Activated T-helper 2 cell treated with anti-CD3 and anti-CD28 coated beads, Interferon-gamma antibody, Interleukin-2, Interleukin-4, amounts not matched to agents 10 μg/mL and 5 μg/mL and 100 μg/mL, durations not matched to agents 14 hours and 24 hours and 36 hours (primary cell): ENCODE measurements at regions of chr10 and their contacts with region 1.

Region 1: GRCh38 chr10:110610308-110610774 is 33.8 kb upstream of the RBM20 start:
- DNase-seq: peak; percentile 28
- H3K4me3 Mint-ChIP-seq: no peak overlapping the region
- H3K27ac Mint-ChIP-seq: no peak overlapping the region
- H3K4me1 Mint-ChIP-seq: peaks cover 26% of the 10 kb centered on the region
- H3K27me3 Mint-ChIP-seq: no peaks in the 10 kb centered on the region

Region 2: DNA sequence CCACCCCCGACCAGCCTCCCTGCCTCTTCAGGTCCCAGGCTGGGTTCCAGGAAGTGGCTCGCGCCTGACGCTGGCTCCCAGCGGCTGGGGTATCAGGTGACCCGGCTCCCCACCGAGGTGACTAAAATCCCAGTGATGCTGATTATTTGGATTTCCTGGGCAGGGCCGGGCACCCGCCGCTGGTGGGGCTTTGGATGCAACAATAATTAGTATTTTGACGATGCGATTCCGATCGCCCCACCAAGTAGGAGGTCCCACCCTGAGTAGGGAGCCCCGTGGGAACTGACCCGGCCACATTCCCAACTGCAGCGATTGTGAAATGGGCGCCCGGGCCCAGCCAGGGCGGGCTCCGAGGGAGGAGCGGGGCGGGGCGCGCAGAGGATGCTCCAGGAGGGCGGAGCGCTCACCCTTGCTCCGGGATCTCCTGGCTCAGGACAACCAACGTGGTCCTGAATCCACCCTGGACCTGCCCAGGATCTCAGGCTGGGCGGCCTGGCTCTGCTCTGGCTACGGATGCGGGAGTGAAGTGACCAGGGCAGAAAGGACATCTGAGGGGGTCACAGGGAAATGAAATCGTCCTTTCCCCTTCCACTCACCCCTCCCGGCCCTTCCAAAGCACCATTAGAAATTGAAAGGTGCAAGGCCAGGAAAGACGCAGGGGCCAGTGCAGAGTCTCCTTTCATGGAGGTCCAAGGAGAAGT is 80.1 kb before region 1 on chr10:
- intact Hi-C with region 1: no loop called
- DNase-seq: no peak
- H3K4me3 Mint-ChIP-seq: no peak overlapping the region
- H3K27ac Mint-ChIP-seq: no peak overlapping the region
- H3K4me1 Mint-ChIP-seq: peaks cover 61% of the 10 kb centered on the region
- H3K27me3 Mint-ChIP-seq: no peaks in the 10 kb centered on the region

Region 3: DNA sequence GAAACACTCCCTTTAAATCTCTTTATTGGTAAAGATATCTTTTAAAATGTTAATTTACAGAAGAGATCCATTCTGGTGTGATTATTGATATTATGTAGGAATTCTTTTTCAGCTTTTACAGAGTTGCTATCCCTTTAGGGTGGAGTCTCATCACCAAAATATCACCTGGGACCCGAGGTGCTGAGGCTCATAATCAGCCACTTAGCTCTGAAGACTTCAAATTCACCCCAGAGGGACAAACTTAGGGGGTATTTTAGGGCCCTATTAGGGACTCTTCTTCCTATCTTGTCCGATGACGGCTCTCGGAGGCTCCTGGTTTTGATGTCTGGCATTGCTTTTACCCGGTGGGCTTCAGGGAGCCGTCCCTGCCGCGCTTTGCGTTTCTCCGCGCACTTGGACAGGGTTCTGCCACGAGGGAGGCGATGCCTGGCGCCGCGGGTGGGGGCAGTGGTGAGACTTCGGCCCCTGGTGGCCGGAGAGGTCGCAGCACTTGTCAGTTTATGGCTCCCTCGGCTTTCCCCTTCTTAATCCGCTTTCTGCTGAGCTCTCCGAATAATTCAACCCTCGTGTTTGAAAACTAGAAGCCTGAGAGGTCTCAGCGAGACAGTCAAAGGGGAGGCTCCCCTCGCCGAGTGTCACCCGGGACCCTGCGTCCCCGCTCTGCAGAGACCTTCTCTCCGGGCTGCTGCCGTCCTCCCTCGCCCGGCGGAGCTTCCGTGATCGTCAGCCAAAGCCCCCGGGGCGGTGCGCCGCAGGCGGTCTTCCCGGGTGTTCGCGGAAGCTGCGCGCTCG is 61.6 kb after region 1 on chr10:
- intact Hi-C with region 1: loop called (anchors 1 kb)
- DNase-seq: peak; percentile 51
- H3K4me3 Mint-ChIP-seq: peak overlapping the region; percentile 84
- H3K27ac Mint-ChIP-seq: no peak overlapping the region
- H3K4me1 Mint-ChIP-seq: peaks cover 2% of the 10 kb centered on the region
- H3K27me3 Mint-ChIP-seq: peaks cover 51% of the 10 kb centered on the region

Region 4: DNA sequence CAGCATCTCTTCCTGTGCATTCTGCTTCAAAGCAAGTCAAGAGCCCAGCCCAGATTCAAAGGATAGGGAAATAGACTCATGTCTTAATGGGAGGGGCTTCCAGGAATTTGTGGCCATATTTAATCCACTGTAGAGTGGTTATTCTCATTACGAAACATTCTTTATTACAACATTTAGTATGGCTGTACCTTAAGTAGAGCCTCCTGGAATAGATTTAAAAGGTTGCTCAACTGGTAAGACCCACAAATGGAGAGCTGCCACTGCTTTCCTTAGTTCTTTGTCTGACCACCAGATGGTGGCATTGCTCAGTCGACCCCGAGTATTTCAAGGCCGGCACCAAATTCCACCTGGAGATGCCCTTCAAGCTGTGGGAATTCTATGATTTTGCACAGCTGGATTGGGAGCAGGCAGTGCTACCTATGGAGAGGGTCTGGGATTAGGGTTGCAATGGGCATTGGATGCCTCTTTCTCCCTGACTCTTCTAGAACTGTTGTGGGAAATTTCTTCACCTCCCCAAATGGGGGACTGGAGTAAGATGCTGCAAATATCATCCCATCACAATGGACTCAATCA is 136.0 kb after region 1 on chr10:
- intact Hi-C with region 1: loop called (anchors 2 kb)
- DNase-seq: peak; percentile 27
- H3K4me3 Mint-ChIP-seq: no peak overlapping the region
- H3K27ac Mint-ChIP-seq: no peak overlapping the region
- H3K4me1 Mint-ChIP-seq: peaks cover 43% of the 10 kb centered on the region
- H3K27me3 Mint-ChIP-seq: no peaks in the 10 kb centered on the region

Region 5: GRCh38 chr10:110993024-110993693 is 382.8 kb after region 1 on chr10:
- intact Hi-C with region 1: loop called (anchors 10 kb)
- DNase-seq: no peak
- H3K4me3 Mint-ChIP-seq: peak overlapping the region; percentile 39
- H3K27ac Mint-ChIP-seq: no peak overlapping the region
- H3K4me1 Mint-ChIP-seq: peaks cover 32% of the 10 kb centered on the region
- H3K27me3 Mint-ChIP-seq: peaks cover 21% of the 10 kb centered on the region

Region 6: DNA sequence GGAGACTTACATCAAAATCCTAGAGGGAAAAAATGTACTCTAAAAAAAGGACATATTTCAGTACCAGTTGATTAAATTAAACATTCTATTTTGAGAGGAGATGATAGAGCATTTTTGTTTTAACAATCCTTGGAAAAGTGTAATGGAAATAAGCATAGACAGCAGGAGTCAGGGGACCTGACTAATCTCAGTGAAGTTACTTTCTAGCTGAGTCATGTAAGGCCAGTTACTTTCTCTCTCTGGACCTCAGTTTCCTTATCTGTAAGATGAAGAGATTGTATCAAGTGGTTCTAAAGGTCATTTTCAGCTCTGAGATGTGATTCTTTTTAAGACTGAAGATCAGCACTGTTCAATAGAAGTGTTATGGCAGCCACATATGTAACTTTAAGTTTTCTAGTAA is 1880.8 kb after region 1 on chr10:
- intact Hi-C with region 1: no loop called
- DNase-seq: no peak
- H3K4me3 Mint-ChIP-seq: no peak overlapping the region
- H3K27ac Mint-ChIP-seq: no peak overlapping the region
- H3K4me1 Mint-ChIP-seq: peaks cover 6% of the 10 kb centered on the region
- H3K27me3 Mint-ChIP-seq: peaks cover 9% of the 10 kb centered on the region